MCF 10A (cell line): ENCODE measurements at regions of chr19 and their contacts with region 1.

Region 1: DNA sequence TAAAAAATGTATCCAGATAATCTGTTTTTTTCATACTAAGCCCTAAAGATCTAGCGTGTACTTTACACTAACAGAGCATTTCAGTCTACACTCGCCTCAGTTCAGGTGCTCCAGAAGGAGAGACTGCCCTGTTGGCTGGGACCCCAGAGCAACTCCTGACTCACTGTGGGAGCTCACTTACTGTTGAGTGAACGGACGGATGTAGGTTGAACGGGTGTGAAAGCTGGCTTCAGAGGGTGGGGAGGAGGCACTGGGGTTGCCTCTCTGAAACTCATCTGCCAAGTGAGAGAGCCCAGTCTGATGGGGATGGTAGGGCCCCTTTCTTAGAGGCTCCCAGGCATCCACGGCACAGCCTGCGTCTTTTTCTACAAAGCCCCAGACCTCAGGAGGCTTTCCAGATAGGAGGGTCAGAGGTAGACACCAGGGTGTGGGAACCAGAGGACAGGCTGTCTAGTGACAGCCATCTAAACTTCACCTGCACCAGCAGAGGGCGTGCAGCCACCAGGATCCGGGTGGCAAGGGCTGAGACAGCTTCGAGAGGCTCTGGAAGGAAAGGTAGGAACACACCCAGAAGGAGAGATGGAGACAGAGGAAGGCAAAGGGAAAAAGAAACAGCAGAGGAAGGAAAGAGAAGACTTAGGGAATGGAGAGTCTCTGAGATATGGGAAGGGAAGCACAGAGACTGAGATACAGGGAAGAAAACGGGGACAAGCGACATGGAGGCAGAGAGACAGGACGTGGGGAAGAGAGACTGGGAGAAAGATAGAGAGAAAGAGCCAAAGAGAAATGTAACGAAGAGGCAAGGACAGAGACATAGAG is 3.7 kb downstream of the KASH5 start:
- DNase-seq: peak; percentile 86
- H3K4me3 Mint-ChIP-seq: no peak overlapping the region
- H3K27ac Mint-ChIP-seq: no peak overlapping the region
- H3K4me1 Mint-ChIP-seq: peaks cover 6% of the 10 kb centered on the region
- H3K27me3 Mint-ChIP-seq: peaks cover 23% of the 10 kb centered on the region
- CTCF ChIP-seq: peak; percentile 92

Region 2: GRCh38 chr19:49430678-49431329 is 39.0 kb after region 1 on chr19:
- CTCF ChIA-PET with region 1: interaction called, 10 read pairs
- POLR2A ChIA-PET with region 1: no interaction called
- intact Hi-C with region 1: loop called (anchors 1 kb)
- DNase-seq: peak; percentile 38
- H3K4me3 Mint-ChIP-seq: no peak overlapping the region
- H3K27ac Mint-ChIP-seq: no peak overlapping the region
- H3K4me1 Mint-ChIP-seq: no peaks in the 10 kb centered on the region
- H3K27me3 Mint-ChIP-seq: peaks cover 43% of the 10 kb centered on the region
- CTCF ChIP-seq: peak; percentile 15